Aorta (tissue), 5 donors: ENCODE measurements at regions of chr19 and their contacts with region 1.

Region 1: GRCh38 chr19:18203863-18204393 is at the start of gene RAB3A:
- DNase-seq: peak; percentile 100
- ATAC-seq: peak; percentile 98
- H3K4me3 ChIP-seq: peak within 1 kb of the TSS; percentile 41 to 66
- H3K27ac ChIP-seq: peak within 1 kb of the TSS; percentile 72 to 87
- H3K4me1 ChIP-seq: peaks cover 0 to 3% of the 10 kb centered on the region in 2 donors
- H3K27me3 ChIP-seq: no peaks in the 10 kb centered on the region
- total RNA-seq, gene RAB3A: 3.4 to 3.8 TPM

Region 2: DNA sequence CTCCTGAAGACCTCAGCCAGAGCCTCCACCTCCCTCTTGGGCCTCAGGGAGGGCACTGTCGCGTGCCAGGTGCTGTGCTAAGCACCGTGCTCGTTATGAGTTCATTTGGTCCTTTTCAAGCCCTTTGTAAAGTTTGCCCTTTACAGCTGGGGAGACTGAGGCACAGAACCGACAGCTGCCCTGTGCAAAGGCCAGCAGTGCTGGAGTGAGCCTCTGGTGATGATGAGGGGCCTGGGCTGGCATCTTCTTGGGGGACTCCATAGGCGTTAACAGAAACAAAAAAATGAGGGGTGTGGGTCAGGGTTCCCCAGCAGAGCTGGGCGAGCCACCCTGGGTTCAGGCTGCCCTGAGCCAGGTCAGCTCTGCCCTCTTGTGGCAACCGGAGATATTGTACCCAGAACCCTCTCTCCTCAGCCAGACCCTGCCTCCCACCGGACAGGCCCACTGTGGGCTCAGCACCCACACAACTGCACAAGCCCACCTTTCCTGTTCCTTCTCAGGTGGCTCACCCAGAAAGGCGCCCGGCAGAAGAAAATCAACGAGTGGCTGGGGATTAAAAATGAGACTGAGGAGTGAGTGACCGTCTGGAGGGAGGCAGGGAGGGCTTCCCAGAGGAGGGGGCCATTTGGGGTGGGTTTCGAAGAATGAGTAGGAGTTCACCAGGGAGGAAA is 35.8 kb before region 1 on chr19:
- intact Hi-C with region 1: no loop called
- DNase-seq: peak in 1 of 2 donors; percentile 56
- ATAC-seq: peak; percentile 72
- H3K4me3 ChIP-seq: no peak overlapping the region
- H3K27ac ChIP-seq: no peak overlapping the region
- H3K4me1 ChIP-seq: no peaks in the 10 kb centered on the region
- H3K27me3 ChIP-seq: no peaks in the 10 kb centered on the region

Region 3: GRCh38 chr19:18179957-18180356 is 24.0 kb before region 1 on chr19:
- intact Hi-C with region 1: no loop called
- DNase-seq: no peak
- ATAC-seq: no peak
- H3K4me3 ChIP-seq: no peak overlapping the region
- H3K27ac ChIP-seq: no peak overlapping the region
- H3K4me1 ChIP-seq: no peaks in the 10 kb centered on the region
- H3K27me3 ChIP-seq: no peaks in the 10 kb centered on the region

Region 4: GRCh38 chr19:18251587-18252369 is 47.9 kb after region 1 on chr19:
- intact Hi-C with region 1: loop called (anchors 5 kb)
- DNase-seq: peak; percentile 76 to 91
- ATAC-seq: peak; percentile 80
- H3K4me3 ChIP-seq: no peak overlapping the region
- H3K27ac ChIP-seq: no peak overlapping the region
- H3K4me1 ChIP-seq: no peaks in the 10 kb centered on the region
- H3K27me3 ChIP-seq: no peaks in the 10 kb centered on the region